CD4-positive, alpha-beta T cell (primary cell): ENCODE measurements at regions of chr20 and their contacts with region 1.

Region 1: GRCh38 chr20:44109951-44110361 is 77.0 kb downstream of the JPH2 start:
- DNase-seq: no peak
- ATAC-seq: no peak
- H3K4me3 ChIP-seq: no peak overlapping the region
- H3K4me3 Mint-ChIP-seq: no peak overlapping the region
- H3K27ac ChIP-seq: no peak overlapping the region
- H3K27ac Mint-ChIP-seq: no peak overlapping the region
- H3K4me1 ChIP-seq: no peaks in the 10 kb centered on the region
- H3K4me1 Mint-ChIP-seq: peaks cover 3% of the 10 kb centered on the region
- H3K27me3 ChIP-seq: peaks cover 18 to 19% of the 10 kb centered on the region in 2 experiments
- H3K27me3 Mint-ChIP-seq: peaks cover 71% of the 10 kb centered on the region
- CTCF ChIP-seq: no peak

Region 2: DNA sequence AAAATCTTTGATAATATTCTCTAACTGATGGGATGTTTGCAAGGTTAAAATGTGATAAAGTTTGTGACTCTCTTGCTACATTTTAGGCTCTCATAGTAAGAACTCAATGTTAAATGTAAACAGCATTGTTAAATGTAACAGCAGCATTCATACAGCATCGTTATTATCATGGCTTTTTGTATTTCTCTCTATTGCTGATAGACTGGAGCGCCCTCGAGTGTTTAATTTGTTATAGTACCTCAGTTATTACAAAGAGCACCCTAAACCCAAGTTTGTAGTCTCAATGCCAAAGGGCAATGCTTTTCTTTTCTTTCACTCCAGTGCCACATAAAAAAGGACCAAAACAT is 350.8 kb after region 1 on chr20:
- CTCF ChIA-PET with region 1: no interaction called
- POLR2A ChIA-PET with region 1: no interaction called
- intact Hi-C with region 1: loop called in 1 of 2 experiments (anchors 10 kb)
- DNase-seq: peak in 4 of 14 experiments; percentile 14 to 41 (median 31)
- ATAC-seq: no peak
- H3K4me3 ChIP-seq: no peak overlapping the region
- H3K4me3 Mint-ChIP-seq: no peak overlapping the region
- H3K27ac ChIP-seq: no peak overlapping the region
- H3K27ac Mint-ChIP-seq: no peak overlapping the region
- H3K4me1 ChIP-seq: no peaks in the 10 kb centered on the region
- H3K4me1 Mint-ChIP-seq: no peaks in the 10 kb centered on the region
- H3K27me3 ChIP-seq: no peaks in the 10 kb centered on the region
- H3K27me3 Mint-ChIP-seq: no peaks in the 10 kb centered on the region
- CTCF ChIP-seq: peak; percentile 43